ENCODE measurements at regions of chr3 and their contacts with region 1.

Region 1: GRCh38 chr3:120348981-120349818 is at the start of gene LRRC58:
- DNase-seq: peak; percentile 81 to 94 (median 89)
- ATAC-seq: peak; percentile 90
- H3K4me3 Mint-ChIP-seq: peak within 1 kb of the TSS; percentile 88 to 97 (median 94)
- H3K27ac Mint-ChIP-seq: peak within 1 kb of the TSS; percentile 82 to 97 (median 96)
- H3K4me1 Mint-ChIP-seq: peaks cover 25 to 49% (median 45%) of the 10 kb centered on the region in 4 donors
- H3K27me3 Mint-ChIP-seq: peaks cover 0 to 5% (median 0%) of the 10 kb centered on the region in 5 donors
- polyA plus RNA-seq, gene LRRC58: 8.1 to 8.7 (median 8.5) TPM

Region 2: DNA sequence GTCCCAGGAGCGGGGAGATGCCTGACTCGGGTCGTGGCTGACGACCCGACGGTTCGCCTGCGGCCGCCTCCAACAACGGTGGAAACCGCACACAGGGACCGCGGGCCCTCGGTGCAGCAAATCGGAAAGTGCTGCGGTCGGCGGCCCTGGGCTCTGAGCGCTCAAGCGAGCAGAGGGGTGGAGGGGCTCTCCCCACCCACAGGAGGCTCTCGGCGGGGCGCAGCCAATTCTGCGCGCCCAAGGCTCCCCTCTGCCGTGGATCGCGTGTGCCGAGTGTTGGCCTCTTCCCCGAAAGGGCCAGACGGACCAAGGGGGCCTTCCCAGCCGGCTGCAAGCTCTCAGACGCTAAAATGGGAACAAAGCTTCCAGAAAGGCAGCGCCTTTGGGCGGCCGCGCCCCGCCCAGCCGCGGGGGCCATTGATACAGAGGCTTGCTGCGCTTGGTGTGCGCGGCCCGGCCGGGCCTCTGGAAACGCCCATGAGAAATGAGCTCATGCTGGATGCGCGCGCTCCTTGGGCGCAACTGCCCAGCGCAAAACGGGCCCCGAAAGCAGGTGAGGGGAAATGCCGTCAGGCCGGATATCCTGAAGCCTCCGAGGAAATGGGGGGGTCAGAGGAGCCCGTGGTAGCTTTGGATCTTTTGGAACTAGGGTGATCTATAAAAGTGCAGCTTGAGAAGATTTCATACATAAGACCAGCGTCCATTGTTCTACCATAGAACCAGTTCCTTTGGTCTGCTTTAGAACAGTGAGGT is 253.8 kb before region 1 on chr3:
- POLR2A ChIA-PET with region 1: interaction called, 52 read pairs
- DNase-seq: peak; percentile 76 to 92 (median 85)
- ATAC-seq: peak; percentile 30 to 37
- H3K4me3 Mint-ChIP-seq: no peak overlapping the region
- H3K27ac Mint-ChIP-seq: peak overlapping the region in 2 of 10 donors; percentile 96 to 98
- H3K4me1 Mint-ChIP-seq: peaks cover 13 to 31% (median 25%) of the 10 kb centered on the region in 4 donors
- H3K27me3 Mint-ChIP-seq: peaks cover 0 to 5% (median 0%) of the 10 kb centered on the region in 5 donors

Region 3: DNA sequence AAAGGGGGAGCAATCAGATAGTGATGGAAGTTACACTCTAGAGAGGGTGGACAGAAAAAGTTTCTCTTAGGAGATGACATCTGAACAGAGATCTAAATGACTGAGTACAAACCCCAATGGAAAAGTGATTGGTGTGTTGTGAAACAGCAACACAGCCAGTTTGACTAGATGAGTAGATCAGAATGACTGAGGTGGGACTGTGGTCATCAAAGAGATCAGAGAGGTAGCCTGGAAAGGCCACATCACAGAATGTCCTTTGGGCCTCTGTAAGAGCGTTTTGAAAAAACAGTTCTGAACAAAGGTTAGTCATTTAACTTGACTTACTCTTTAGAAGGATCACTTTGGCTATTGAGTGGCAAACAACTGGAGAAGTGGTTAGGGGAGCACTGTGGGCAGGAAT is 10.7 kb before region 1 on chr3:
- POLR2A ChIA-PET with region 1: interaction called, 12 read pairs
- DNase-seq: no peak
- ATAC-seq: no peak
- H3K4me3 Mint-ChIP-seq: peak overlapping the region in 1 of 10 donors; percentile 29
- H3K27ac Mint-ChIP-seq: peak overlapping the region in 3 of 10 donors; percentile 3 to 44 (median 9)
- H3K4me1 Mint-ChIP-seq: peaks cover 13 to 43% (median 41%) of the 10 kb centered on the region in 4 donors
- H3K27me3 Mint-ChIP-seq: no peaks in the 10 kb centered on the region

Region 4: DNA sequence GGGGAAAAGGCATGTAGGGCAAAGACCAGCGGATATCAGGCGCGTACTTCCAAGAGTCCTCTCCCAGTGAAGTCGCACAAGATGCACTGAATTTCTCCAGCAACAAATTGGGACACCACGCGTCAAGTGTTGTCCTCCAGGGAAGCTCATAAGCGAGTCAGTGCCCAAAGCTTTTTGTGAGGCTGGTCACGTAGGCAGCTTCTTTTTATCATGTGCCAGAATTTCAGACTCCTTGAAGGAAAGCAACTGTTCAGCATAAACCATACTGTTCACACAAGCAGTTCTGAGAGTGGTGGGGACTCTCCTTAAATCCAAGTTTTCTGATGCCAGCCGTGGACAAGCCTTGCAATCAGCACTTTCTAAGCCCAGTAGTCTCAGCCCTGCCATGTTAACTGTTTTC is 111.7 kb after region 1 on chr3:
- POLR2A ChIA-PET with region 1: no interaction called
- DNase-seq: no peak
- ATAC-seq: no peak
- H3K4me3 Mint-ChIP-seq: no peak overlapping the region
- H3K27ac Mint-ChIP-seq: no peak overlapping the region
- H3K4me1 Mint-ChIP-seq: no peaks in the 10 kb centered on the region
- H3K27me3 Mint-ChIP-seq: peaks cover 0 to 11% (median 4%) of the 10 kb centered on the region in 5 donors

Region 5: GRCh38 chr3:120596116-120596852 is 247.1 kb after region 1 on chr3 and contains the start of gene NDUFB4:
- POLR2A ChIA-PET with region 1: interaction called, 11 read pairs
- DNase-seq: peak; percentile 89 to 98 (median 94)
- ATAC-seq: peak; percentile 91 to 93
- H3K4me3 Mint-ChIP-seq: peak within 1 kb of the TSS in 9 of 10 donors; percentile 90 to 98 (median 95)
- H3K27ac Mint-ChIP-seq: peak within 1 kb of the TSS in 8 of 10 donors; percentile 96 to 99 (median 98)
- H3K4me1 Mint-ChIP-seq: peaks cover 9 to 15% (median 13%) of the 10 kb centered on the region in 4 donors
- H3K27me3 Mint-ChIP-seq: peaks cover 0 to 2% (median 0%) of the 10 kb centered on the region in 5 donors
- polyA plus RNA-seq, gene NDUFB4: 249 to 277 (median 277) TPM

Region 6: DNA sequence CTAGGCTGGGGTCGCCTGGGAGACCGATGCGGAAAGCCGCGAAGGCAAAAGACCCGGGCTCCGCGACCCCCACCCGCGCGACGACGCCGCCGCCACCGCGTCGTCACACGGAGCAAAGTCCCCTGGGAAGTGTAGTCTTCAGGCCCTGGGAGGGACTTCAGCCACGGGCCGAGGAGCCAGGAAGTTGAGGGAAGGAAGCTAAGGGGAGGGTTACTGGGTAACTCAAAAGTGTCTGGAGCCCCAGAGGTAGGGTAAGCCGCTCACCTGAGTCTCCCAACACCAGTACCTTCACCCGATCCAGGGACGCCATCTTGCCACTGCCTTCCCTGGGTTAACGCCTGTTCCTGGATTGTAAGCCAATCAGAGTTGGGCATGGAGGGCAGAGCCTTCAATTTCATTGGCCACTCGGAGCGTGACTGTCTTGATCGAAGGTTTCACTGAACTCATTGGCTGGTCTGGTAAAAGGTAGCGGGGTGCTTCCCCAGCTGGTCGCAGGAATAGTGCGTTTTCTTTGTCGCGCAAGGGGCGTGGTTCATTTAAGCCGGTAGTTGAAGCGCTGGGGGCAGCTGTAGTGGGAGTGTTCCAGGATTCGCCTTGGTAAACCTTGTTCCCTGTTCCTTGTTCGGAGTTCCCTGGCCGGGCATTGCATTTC is 393.1 kb after region 1 on chr3 and contains the starts of genes GTF2E1 and RABL3:
- POLR2A ChIA-PET with region 1: interaction called, 14 read pairs
- DNase-seq: peak; percentile 80 to 98 (median 98)
- ATAC-seq: peak; percentile 96
- H3K4me3 Mint-ChIP-seq: peak within 1 kb of the TSS; percentile 87 to 98 (median 95)
- H3K27ac Mint-ChIP-seq: peak within 1 kb of the TSS; percentile 95 to 99 (median 98)
- H3K4me1 Mint-ChIP-seq: peaks cover 22 to 50% (median 41%) of the 10 kb centered on the region in 4 donors
- H3K27me3 Mint-ChIP-seq: no peaks in the 10 kb centered on the region
- polyA plus RNA-seq, gene GTF2E1: 10.9 to 15.9 (median 11.5) TPM
- polyA plus RNA-seq, gene RABL3: 29.5 to 41.9 (median 39.0) TPM

Measured in naive thymus-derived CD8-positive, alpha-beta T cell (primary cell).